CD8-positive, alpha-beta memory T cell (primary cell): ENCODE measurements at regions of chr12 and their contacts with region 1.

Region 1: DNA sequence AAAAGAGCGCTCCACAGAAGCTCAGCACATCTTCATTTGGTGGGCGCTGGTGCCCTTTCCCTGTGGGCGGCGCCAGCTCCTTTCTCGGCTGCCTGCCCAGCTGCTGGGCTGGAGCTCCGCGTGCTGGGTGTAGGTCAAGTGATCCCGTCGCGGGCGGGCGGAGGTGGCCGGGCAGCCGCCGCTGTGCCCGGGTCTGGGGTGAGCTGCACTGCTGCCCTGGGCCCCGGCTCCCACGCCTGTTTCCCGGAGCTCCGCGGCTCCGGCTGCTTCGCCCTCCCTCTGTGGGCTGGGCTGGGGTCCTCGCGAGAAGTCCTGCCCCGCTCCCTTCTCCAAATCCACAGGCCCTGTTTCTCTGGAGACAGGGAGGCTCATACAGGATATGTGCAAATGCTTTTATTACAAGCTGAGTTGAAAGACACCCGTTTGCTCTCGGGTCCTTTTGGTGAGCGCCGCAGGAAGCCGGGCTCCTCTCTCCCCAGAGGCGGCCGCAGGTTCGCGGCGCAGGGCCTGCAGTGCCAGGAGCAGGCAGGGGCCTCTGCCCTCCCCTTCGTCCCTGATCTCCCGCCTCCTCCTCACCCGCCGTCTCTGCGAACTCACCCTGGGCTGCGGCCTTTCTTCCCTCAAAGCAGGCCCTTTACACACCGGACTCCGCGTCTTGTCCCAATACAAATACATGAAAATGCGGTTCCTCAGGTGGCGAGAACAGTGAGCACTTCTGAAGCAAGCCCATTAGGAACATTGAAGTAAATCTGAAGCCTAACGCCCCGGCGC is 67.8 kb upstream of the CAPRIN2 start:
- DNase-seq: peak in 4 of 5 donors; percentile 5 to 49 (median 30)
- H3K4me3 ChIP-seq: peak overlapping the region; percentile 61
- H3K4me3 Mint-ChIP-seq: peak overlapping the region; percentile 85 to 96 (median 93)
- H3K27ac ChIP-seq: no peak overlapping the region
- H3K27ac Mint-ChIP-seq: peak overlapping the region in 7 of 8 donors; percentile 17 to 97 (median 86)
- H3K4me1 ChIP-seq: peaks cover 6% of the 10 kb centered on the region
- H3K4me1 Mint-ChIP-seq: peaks cover 12 to 23% (median 21%) of the 10 kb centered on the region in 3 donors
- H3K27me3 ChIP-seq: no peaks in the 10 kb centered on the region
- H3K27me3 Mint-ChIP-seq: peaks cover 16 to 55% of the 10 kb centered on the region in 2 donors

Region 2: DNA sequence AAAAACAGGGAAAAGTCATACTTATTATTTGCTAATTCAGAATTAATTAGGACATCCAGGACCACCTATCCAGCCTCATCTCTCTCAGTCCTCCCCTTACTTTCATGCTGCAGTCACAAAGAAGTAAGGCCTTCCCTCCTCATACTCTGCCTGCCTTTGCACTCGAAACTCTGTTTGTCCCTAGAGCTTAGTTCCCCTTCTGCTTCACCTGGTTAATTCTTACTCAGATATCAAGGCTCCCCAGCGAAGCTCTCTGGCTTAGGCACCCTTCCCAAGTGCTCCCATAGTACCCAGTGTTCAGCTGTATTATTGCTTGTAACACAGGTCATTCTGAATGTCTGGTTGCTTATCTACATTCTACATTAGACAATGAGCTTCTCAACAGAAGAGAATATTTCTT is 1522.9 kb before region 1 on chr12:
- CTCF ChIA-PET with region 1: no interaction called
- POLR2A ChIA-PET with region 1: interaction called, 11 read pairs
- DNase-seq: no peak
- H3K4me3 ChIP-seq: no peak overlapping the region
- H3K4me3 Mint-ChIP-seq: no peak overlapping the region
- H3K27ac ChIP-seq: no peak overlapping the region
- H3K27ac Mint-ChIP-seq: no peak overlapping the region
- H3K4me1 ChIP-seq: no peaks in the 10 kb centered on the region
- H3K4me1 Mint-ChIP-seq: no peaks in the 10 kb centered on the region
- H3K27me3 ChIP-seq: no peaks in the 10 kb centered on the region
- H3K27me3 Mint-ChIP-seq: no peaks in the 10 kb centered on the region

Region 3: DNA sequence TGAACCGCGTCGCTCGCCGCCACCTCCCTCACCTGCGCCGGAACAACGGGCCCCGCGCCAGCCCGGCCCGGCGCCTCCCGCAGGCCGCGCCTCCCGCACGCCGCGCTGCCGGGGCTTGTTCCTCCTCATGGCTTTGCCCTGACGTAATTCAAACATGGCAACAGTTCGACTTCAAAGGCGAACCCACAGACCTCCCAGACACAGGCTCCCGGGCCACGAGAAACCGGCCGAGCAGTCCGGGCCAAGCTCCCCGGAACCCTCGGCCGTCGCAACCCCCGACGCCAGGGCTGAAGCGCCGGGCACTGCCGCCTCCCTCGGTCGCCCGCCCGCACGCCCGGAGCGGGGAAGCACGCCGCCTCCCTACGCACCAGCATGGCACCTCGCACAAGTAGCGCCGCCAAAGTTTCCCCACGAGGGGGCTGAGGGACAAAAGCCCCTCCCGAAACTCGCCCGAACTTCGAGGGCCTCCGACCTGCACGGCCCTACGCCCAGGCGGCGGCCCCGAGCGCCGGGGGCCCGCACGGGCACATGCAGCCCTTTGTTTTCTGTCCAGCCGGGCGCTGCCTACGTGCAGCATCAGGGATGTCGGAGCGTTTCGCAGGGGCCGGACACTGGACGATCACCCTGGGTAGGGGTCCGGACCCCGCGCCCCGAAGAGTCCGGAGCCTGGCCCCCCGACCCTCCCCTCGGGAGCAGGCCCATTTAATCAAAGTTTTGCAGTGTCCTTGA is 501.7 kb after region 1 on chr12:
- CTCF ChIA-PET with region 1: no interaction called
- POLR2A ChIA-PET with region 1: interaction called, 11 read pairs
- DNase-seq: peak; percentile 61 to 92 (median 85)
- H3K4me3 ChIP-seq: peak overlapping the region; percentile 81
- H3K4me3 Mint-ChIP-seq: peak overlapping the region; percentile 89 to 100 (median 98)
- H3K27ac ChIP-seq: peak overlapping the region; percentile 91
- H3K27ac Mint-ChIP-seq: peak overlapping the region; percentile 89 to 99 (median 97)
- H3K4me1 ChIP-seq: peaks cover 38% of the 10 kb centered on the region
- H3K4me1 Mint-ChIP-seq: peaks cover 47 to 63% (median 61%) of the 10 kb centered on the region in 3 donors
- H3K27me3 ChIP-seq: no peaks in the 10 kb centered on the region
- H3K27me3 Mint-ChIP-seq: peaks cover 0 to 4% of the 10 kb centered on the region in 2 donors